Activated CD4-positive, alpha-beta T cell treated with anti-CD3 and anti-CD28 coated beads for 36 hours (primary cell): ENCODE measurements at regions of chr18 and their contacts with region 1.

Region 1: GRCh38 chr18:38611036-38611964 is 1045.7 kb upstream of the CELF4 start:
- DNase-seq: peak; percentile 54
- ATAC-seq: peak; percentile 76
- H3K4me3 Mint-ChIP-seq: no peak overlapping the region
- H3K27ac Mint-ChIP-seq: peak overlapping the region; percentile 80
- H3K4me1 Mint-ChIP-seq: peaks cover 38% of the 10 kb centered on the region
- H3K27me3 Mint-ChIP-seq: no peaks in the 10 kb centered on the region

Region 2: DNA sequence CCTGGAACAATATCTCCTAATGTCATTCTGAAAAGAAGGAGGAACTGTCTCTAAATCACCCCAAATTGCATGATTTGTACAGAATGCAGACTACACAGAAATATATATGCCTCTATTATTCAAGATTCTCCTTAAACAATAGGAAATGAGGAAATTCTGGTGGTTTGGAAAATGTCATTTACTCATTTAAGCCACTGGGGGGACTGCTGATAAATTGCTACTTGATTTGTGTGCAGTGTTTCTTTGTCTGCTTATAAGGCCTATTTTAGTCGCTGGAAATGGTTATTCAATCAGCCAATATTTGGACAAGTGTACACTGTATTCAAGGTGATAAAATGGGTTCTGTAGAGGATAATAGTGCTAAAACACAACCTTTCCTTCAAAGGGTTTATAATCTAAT is 243.8 kb before region 1 on chr18:
- CTCF ChIA-PET with region 1: no interaction called
- POLR2A ChIA-PET with region 1: no interaction called
- intact Hi-C with region 1: no loop called
- DNase-seq: no peak
- ATAC-seq: no peak
- H3K4me3 Mint-ChIP-seq: no peak overlapping the region
- H3K27ac Mint-ChIP-seq: no peak overlapping the region
- H3K4me1 Mint-ChIP-seq: peaks cover 9% of the 10 kb centered on the region
- H3K27me3 Mint-ChIP-seq: no peaks in the 10 kb centered on the region

Region 3: GRCh38 chr18:38497266-38497665 is 114.0 kb before region 1 on chr18:
- CTCF ChIA-PET with region 1: no interaction called
- POLR2A ChIA-PET with region 1: no interaction called
- intact Hi-C with region 1: loop called (anchors 1 to 2 kb)
- DNase-seq: peak; percentile 32
- ATAC-seq: peak; percentile 48
- H3K4me3 Mint-ChIP-seq: no peak overlapping the region
- H3K27ac Mint-ChIP-seq: no peak overlapping the region
- H3K4me1 Mint-ChIP-seq: peaks cover 20% of the 10 kb centered on the region
- H3K27me3 Mint-ChIP-seq: peaks cover 3% of the 10 kb centered on the region

Region 4: GRCh38 chr18:38520786-38521185 is 90.5 kb before region 1 on chr18:
- CTCF ChIA-PET with region 1: no interaction called
- POLR2A ChIA-PET with region 1: no interaction called
- intact Hi-C with region 1: no loop called
- DNase-seq: no peak
- ATAC-seq: no peak
- H3K4me3 Mint-ChIP-seq: no peak overlapping the region
- H3K27ac Mint-ChIP-seq: no peak overlapping the region
- H3K4me1 Mint-ChIP-seq: no peaks in the 10 kb centered on the region
- H3K27me3 Mint-ChIP-seq: no peaks in the 10 kb centered on the region

Region 5: GRCh38 chr18:38884050-38884449 is 272.8 kb after region 1 on chr18:
- CTCF ChIA-PET with region 1: no interaction called
- POLR2A ChIA-PET with region 1: no interaction called
- intact Hi-C with region 1: no loop called
- DNase-seq: no peak
- ATAC-seq: no peak
- H3K4me3 Mint-ChIP-seq: no peak overlapping the region
- H3K27ac Mint-ChIP-seq: no peak overlapping the region
- H3K4me1 Mint-ChIP-seq: no peaks in the 10 kb centered on the region
- H3K27me3 Mint-ChIP-seq: no peaks in the 10 kb centered on the region